Activated naive CD4-positive, alpha-beta T cell treated with anti-CD3 and anti-CD28 coated beads for 36 hours (primary cell): ENCODE measurements at regions of chr13 and their contacts with region 1.

Region 1: GRCh38 chr13:102800145-102801041 is 1.5 kb downstream of the BIVM start:
- DNase-seq: peak; percentile 83
- H3K4me3 Mint-ChIP-seq: peak overlapping the region; percentile 93
- H3K27ac Mint-ChIP-seq: no peak overlapping the region
- H3K4me1 Mint-ChIP-seq: peaks cover 13% of the 10 kb centered on the region
- H3K27me3 Mint-ChIP-seq: peaks cover 21% of the 10 kb centered on the region

Region 2: DNA sequence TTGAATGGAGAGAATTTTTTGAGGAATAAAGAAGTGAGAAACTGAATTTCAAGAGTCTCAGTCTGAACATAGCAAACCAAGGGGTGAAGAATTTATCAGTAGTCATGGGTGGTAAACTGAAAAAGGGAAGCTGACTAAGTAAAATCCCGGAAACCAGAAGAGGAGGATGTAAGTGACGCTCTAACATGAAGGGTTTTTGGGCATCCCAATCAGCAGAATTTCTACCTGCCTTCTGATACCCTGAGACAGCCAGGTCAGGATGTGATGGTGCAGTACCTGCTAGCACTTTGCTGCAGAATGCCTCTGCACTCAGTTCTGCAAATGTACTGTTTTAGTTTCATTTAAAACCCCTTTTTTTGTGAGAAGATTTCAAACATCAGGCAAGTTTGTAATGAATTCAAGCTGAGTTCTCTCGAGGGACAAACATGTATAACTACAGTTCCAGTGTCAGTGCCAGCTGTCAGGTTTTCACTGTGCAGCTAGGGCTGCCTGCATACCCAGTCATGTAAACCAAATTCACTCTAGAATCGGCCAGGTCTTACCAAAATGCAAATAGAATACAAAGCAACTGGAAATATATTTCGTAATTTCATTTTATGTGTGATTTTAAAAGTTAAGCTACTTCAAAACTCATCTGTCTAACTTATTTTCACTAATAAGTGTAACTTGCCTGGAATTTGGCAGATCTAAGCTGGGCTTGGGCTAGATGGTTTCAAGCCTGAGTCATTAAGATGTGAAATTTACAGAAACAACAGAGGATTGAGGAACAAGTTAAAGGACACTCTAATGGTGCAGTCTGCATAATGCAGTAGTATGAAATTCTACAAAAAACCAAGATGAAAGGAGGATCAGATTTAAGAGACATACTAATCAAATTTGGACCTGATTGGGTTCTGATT is 119.3 kb before region 1 on chr13:
- CTCF ChIA-PET with region 1: no interaction called
- intact Hi-C with region 1: loop called (anchors 2 kb)
- DNase-seq: peak; percentile 12
- H3K4me3 Mint-ChIP-seq: no peak overlapping the region
- H3K27ac Mint-ChIP-seq: peak overlapping the region; percentile 47
- H3K4me1 Mint-ChIP-seq: peaks cover 25% of the 10 kb centered on the region
- H3K27me3 Mint-ChIP-seq: no peaks in the 10 kb centered on the region

Region 3: DNA sequence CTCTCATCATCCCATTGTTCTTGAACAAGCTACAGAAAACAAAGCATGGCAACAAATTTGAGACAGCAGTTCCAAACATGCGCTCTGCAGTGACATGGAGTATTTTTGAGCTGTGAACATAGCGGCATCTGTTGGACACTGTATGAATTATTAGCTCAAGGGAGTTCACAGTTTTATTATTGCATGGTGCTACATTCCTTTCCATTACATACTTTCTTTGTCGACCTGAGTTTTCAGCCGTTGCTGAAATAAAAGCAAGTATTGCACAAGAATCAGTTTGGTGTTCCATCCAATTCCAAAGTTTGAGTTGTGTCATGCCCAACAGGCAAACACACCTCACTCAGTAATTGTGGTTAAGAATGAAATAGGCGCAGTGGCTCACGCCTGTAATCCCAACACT is 75.5 kb before region 1 on chr13:
- CTCF ChIA-PET with region 1: interaction called, 3 read pairs
- intact Hi-C with region 1: loop called (anchors 2 kb)
- DNase-seq: peak; percentile 9
- H3K4me3 Mint-ChIP-seq: no peak overlapping the region
- H3K27ac Mint-ChIP-seq: no peak overlapping the region
- H3K4me1 Mint-ChIP-seq: no peaks in the 10 kb centered on the region
- H3K27me3 Mint-ChIP-seq: peaks cover 4% of the 10 kb centered on the region

Region 4: GRCh38 chr13:102773441-102774215 is 26.8 kb before region 1 on chr13 and contains the start of gene TEX30:
- CTCF ChIA-PET with region 1: interaction called, 5 read pairs
- intact Hi-C with region 1: loop called (anchors 1 kb)
- DNase-seq: peak; percentile 83
- H3K4me3 Mint-ChIP-seq: peak within 1 kb of the TSS; percentile 82
- H3K27ac Mint-ChIP-seq: peak within 1 kb of the TSS; percentile 87
- H3K4me1 Mint-ChIP-seq: peaks cover 34% of the 10 kb centered on the region
- H3K27me3 Mint-ChIP-seq: no peaks in the 10 kb centered on the region
- total RNA-seq, gene TEX30: 20.8 to 23.0 TPM

Region 5: DNA sequence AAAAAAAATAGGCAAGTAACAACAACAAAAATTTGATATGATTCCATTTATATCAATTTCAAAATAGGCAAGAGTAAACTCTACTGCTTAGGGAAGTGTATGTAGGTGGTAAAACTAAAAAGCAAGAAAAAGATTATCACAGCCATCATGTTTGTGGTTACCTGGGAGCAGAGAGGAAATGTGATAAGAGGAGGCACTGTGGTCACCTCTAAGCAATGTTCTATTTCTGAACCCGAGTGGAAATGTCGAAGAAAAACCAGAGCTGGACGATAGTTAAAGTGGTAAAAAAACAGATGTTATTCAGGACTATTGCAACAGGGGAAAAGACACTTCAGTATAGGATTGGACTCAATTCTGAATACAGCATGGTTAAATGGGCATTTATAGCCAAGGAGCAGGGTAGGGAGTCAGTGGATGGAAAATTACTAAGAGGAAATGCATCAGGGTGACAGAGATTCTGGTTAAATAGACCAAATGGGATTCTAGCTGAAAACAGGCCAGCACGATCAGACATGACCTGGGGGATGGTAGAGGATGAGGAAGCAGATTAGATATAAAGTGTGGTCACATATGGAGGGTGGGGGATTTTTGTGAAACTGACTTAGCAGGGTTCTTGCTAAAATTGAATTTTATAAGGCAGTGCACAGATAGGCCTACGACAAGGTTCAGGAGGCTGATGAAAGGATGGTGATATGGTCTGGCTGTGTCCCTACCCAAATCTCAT is 20.8 kb before region 1 on chr13:
- CTCF ChIA-PET with region 1: interaction called, 3 read pairs
- intact Hi-C with region 1: loop called (anchors 1 kb)
- DNase-seq: peak; percentile 36
- H3K4me3 Mint-ChIP-seq: peak overlapping the region; percentile 10
- H3K27ac Mint-ChIP-seq: peak overlapping the region; percentile 72
- H3K4me1 Mint-ChIP-seq: peaks cover 13% of the 10 kb centered on the region
- H3K27me3 Mint-ChIP-seq: no peaks in the 10 kb centered on the region

Region 6: GRCh38 chr13:102978168-102978567 is 177.8 kb after region 1 on chr13:
- CTCF ChIA-PET with region 1: no interaction called
- intact Hi-C with region 1: no loop called
- DNase-seq: no peak
- H3K4me3 Mint-ChIP-seq: no peak overlapping the region
- H3K27ac Mint-ChIP-seq: no peak overlapping the region
- H3K4me1 Mint-ChIP-seq: no peaks in the 10 kb centered on the region
- H3K27me3 Mint-ChIP-seq: peaks cover 8% of the 10 kb centered on the region